ENCODE measurements at regions of chr19 and their contacts with region 1.

Region 1: GRCh38 chr19:7943444-7944176 is at the start of gene TIMM44:
- DNase-seq: peak; percentile 100
- H3K4me3 Mint-ChIP-seq: peak within 1 kb of the TSS; percentile 98
- H3K27ac Mint-ChIP-seq: peak within 1 kb of the TSS; percentile 98
- H3K4me1 Mint-ChIP-seq: peaks cover 22% of the 10 kb centered on the region
- H3K27me3 Mint-ChIP-seq: no peaks in the 10 kb centered on the region
- total RNA-seq, gene TIMM44: 110 and 111 TPM in 2 replicates

Region 2: DNA sequence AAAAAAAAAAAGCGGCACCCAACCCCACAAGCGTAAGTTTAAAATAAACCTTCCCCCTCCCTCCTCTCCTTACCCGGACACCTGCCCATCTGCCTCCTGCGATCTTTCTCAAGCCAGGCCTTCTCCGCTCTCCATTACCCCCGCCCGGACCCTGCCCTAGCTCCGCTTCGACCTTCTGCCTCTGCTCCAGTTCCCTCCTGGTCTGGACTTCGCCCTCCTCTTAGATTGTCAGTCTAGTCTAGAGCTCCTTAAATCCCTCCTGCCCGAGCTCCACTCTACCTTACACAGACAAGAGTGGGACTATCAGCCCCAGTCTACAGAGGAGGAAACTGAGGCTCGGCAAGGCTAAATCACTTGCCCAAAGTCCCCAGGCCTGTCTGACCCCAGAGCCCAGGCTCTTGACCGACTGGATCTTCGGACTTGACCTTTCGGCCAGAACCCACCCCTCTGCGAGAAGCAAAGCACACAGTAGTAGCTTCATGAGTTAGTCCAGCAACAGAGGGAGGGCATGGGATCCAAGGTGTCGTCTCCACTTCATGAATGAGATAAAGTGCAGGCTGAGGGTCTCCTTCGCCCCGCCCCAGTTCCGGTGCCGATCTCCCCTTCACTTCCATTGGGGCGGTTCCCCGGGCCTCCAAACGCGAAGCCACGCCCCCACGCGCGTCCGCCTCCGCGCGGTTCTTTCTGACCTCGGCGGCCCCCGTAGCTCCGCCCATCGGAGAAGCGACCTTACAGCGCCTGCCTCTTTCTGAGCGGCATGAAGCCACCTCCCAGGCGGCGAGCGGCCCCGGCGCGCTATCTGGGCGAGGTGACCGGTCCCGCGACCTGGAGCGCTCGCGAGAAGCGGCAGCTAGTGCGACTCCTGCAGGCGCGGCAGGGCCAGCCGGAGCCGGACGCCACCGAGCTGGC is 23.7 kb before region 1 on chr19 and contains the start of gene SNAPC2:
- intact Hi-C with region 1: loop called (anchors 1 kb)
- DNase-seq: peak; percentile 99
- H3K4me3 Mint-ChIP-seq: peak within 1 kb of the TSS; percentile 94
- H3K27ac Mint-ChIP-seq: peak within 1 kb of the TSS; percentile 98
- H3K4me1 Mint-ChIP-seq: peaks cover 28% of the 10 kb centered on the region
- H3K27me3 Mint-ChIP-seq: peaks cover 28% of the 10 kb centered on the region
- total RNA-seq, gene SNAPC2: 21.8 and 23.2 TPM in 2 replicates

Region 3: DNA sequence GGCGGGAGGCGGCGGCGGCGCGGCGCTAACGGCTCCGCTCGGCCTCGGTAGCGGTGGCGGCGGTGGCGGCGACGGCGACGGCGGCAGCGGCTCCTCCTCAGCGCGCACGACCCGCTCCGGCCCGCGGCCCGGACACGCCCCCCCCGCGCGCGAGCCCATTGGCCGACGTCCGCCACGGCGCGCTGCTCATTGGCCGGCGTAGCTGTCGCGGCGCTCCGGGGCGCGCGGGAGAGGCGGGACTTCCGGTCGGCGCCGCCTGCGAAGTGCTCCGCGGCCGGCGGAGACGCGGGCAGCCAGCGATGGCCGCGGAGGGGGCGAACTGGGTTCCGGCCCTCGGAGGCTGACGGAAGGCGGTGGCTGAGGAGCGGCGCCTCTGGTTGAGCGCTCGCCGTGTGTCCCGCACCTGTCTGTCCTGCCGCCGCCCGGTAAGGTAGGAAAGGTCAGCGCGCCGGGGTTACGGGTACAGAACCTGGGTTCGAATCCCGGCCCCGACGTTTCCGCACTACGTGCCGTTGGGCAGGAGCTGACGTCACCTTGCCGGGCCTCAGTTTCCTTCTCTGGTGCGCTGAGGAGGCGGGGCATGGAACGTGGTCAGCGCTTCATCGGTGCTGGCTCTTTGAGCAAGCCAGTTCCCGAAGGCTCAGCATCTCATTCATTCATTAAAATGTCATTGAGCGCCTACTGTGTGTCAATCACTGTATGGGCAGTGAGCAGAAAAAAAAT is 62.1 kb after region 1 on chr19 and contains the start of gene ELAVL1:
- intact Hi-C with region 1: loop called (anchors 1 kb)
- DNase-seq: peak; percentile 98
- H3K4me3 Mint-ChIP-seq: peak within 1 kb of the TSS; percentile 96
- H3K27ac Mint-ChIP-seq: peak within 1 kb of the TSS; percentile 89
- H3K4me1 Mint-ChIP-seq: peaks cover 30% of the 10 kb centered on the region
- H3K27me3 Mint-ChIP-seq: no peaks in the 10 kb centered on the region
- total RNA-seq, gene ELAVL1: 191 and 193 TPM in 2 replicates

Region 4: DNA sequence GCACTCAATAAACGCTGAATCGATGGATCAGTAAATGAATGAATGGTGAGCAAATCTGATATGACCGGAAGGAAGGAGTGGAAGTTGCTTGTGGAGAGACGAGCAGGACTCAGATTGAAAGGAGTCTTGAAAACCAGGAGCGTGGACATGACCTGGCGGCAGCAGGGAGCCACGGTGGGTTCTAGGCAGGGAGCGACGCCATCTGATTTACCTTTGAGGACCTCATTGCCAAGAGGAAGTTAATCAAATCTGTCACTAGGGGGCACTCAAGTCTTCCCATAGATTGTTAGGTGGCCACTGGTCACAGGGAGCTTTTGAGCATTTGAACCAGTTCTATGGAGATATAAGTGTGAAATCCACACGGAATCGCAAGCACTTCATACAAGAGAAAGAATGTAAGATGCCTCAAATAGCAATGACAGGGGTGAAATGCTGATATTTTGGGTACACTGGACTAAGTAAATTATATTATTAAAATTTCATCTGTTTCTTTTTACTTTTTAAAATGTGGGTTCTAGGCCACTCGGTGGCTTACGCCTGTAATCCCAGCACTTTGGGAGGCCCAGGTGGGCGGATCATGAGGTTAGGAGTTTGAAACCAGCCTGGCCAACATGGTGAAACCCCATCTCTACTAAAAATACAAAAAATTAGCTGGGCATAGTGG is 214.9 kb after region 1 on chr19:
- intact Hi-C with region 1: loop called (anchors 10 kb)
- DNase-seq: peak; percentile 88
- H3K4me3 Mint-ChIP-seq: no peak overlapping the region
- H3K27ac Mint-ChIP-seq: no peak overlapping the region
- H3K4me1 Mint-ChIP-seq: peaks cover 7% of the 10 kb centered on the region
- H3K27me3 Mint-ChIP-seq: peaks cover 22% of the 10 kb centered on the region